ENCODE measurements at regions of chr20 and their contacts with region 1.

Region 1: DNA sequence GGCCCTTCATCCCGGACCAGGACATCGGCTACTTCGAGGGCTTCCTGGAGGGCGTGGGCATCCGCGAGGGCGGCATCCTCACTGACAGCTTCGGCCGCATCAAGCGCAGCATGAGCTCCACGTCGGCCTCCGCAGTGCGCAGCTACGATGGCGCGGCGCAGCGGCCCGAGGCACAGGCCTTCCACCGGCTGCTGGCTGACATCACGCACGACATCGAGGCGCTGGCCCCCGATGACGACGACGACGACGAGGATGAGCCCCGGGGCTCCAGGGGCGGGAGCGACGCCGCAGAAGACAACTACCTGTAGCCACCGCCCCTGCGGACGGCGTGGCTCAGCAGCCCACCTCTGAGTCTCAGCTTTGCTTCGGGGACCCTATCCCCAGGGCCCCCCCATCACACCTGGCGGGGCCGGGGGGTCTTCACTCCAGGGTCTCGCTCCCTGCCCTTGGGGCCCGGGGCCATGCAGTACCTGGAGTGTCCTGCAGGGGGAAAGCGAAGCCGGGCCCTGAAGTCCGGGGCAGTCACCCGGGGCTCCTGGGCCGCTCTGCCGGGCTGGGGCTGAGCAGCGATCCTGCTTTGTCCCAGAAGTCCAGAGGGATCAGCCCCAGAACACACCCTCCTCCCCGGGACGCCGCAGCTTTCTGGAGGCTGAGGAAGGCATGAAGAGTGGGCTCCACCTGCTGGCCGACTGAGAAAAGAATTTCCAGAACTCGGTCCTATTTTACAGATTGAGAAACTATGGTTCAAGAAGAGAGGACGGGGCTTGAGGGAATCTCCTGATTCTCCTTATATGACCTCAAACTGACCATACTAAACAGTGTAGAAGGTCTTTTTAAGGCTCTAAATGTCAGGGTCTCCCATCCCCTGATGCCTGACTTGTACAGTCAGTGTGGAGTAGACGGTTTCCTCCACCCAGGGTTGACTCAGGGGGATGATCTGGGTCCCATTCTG is 20.8 kb upstream of the HCK start:
- DNase-seq: peak; percentile 38
- H3K4me3 ChIP-seq: peak overlapping the region; percentile 19
- H3K27me3 ChIP-seq: peaks cover 37% of the 10 kb centered on the region
- CTCF ChIP-seq: peak; percentile 87

Region 2: GRCh38 chr20:31602779-31603441 is 428.4 kb before region 1 on chr20:
- CTCF ChIA-PET with region 1: no interaction called
- POLR2A ChIA-PET with region 1: no interaction called
- DNase-seq: no peak
- H3K4me3 ChIP-seq: no peak overlapping the region
- H3K27me3 ChIP-seq: no peaks in the 10 kb centered on the region
- CTCF ChIP-seq: 0 out of 2 replicates have a peak, but pooled peaks have one; percentile 15

Region 3: DNA sequence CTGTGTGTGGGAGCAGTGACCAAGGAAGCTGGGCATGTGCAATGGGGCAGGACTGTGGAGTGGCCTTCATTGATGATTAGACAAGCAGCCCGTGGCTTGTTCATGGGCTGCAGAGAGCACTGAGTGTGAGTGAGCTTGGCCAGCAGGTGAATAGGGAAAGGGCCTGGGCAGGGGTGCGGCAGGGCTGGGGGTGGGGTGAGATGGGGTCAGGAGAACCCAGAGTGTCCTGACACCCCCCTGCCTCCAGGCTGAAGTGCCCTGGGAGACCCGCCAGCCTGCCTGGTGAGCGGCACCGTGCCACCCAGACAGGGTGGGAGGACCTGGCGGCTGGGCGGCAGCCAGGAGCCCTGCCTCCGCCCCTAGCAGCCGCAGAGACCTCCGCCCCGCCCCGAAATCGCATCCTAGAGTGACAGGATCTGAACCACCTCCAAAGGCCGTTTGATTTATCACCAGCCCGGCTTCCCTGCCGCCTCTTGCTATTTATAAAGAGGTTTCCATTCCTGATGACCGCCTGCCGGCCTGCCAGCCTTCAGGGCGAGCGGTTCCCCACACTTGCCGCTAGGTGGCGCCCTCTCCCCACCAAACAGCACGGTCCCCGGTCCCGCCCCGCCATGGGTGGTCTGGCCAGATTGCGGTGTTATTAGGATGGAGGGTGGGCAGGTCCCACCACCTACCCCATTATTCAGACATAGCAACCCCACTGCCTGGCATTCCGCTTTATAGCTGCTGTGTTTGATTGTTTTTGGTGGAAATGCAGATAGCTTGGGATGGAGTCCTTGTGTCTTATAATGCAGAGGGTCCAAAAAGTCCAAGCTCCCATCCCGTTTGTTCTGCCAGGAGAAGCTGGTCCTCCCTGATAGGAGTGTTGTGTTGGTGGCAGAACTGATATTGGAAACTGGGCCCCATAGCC is 208.6 kb before region 1 on chr20:
- CTCF ChIA-PET with region 1: interaction called, 83 read pairs
- POLR2A ChIA-PET with region 1: no interaction called
- DNase-seq: no peak
- H3K4me3 ChIP-seq: peak overlapping the region; percentile 7; the same call in 1 of the 2 replicates
- H3K27me3 ChIP-seq: no peaks in the 10 kb centered on the region
- CTCF ChIP-seq: peak; percentile 97

Region 4: GRCh38 chr20:31849455-31849925 is 181.8 kb before region 1 on chr20:
- CTCF ChIA-PET with region 1: interaction called, 121 read pairs
- POLR2A ChIA-PET with region 1: no interaction called
- DNase-seq: no peak
- H3K4me3 ChIP-seq: no peak overlapping the region
- H3K27me3 ChIP-seq: peaks cover 24% of the 10 kb centered on the region
- CTCF ChIP-seq: no peak

Region 5: GRCh38 chr20:31879143-31879987 is 151.9 kb before region 1 on chr20:
- CTCF ChIA-PET with region 1: no interaction called
- POLR2A ChIA-PET with region 1: no interaction called
- DNase-seq: peak; percentile 69
- H3K4me3 ChIP-seq: peak overlapping the region; percentile 62
- H3K27me3 ChIP-seq: peaks cover 3% of the 10 kb centered on the region
- CTCF ChIP-seq: no peak

Region 6: DNA sequence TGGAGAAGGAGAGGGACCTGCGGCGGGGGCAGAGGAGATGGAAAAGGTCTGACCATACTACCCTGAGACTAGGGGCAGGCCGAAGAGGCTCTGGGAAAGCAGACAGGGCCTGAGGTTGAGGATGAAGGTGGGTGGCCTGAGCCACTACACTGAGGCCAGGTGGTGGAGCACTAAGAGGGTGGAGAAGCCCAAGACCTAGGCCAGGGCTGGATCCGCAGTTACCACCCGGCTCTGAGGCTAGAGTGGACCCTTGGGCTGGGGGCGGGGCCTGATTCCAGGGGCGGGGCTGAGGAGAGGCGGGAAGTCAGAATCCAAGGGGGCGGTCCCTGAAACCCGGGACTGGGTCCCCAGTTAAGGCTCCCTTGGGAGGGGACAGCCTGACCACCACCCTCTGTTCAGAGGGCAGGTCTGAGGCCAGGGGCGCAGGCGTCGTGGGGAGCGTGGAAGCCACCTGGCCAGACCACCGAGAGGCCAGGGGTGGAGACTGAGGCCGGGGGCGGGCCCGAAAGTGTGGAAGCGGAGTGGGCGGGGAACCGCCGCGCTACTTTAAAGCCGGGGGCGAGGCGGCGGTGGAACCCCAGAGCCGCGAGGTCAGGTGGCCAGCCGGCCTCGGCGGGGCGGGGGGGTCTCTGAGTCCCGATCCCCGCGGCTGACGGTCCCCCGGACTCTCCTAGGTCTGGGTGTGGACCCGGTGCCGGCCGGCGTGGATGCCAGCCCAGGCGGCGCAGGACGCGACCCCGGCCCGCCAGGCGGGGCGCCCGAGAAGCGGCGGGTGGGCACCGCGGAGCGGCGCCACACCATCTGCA is 12.8 kb before region 1 on chr20:
- CTCF ChIA-PET with region 1: interaction called, 40 read pairs
- POLR2A ChIA-PET with region 1: no interaction called
- DNase-seq: no peak
- H3K4me3 ChIP-seq: peak overlapping the region; percentile 28
- H3K27me3 ChIP-seq: peaks cover 32% of the 10 kb centered on the region
- CTCF ChIP-seq: no peak

Region 7: GRCh38 chr20:32091888-32092346 is 60.6 kb after region 1 on chr20:
- CTCF ChIA-PET with region 1: interaction called, 167 read pairs
- POLR2A ChIA-PET with region 1: no interaction called
- DNase-seq: no peak
- H3K4me3 ChIP-seq: no peak overlapping the region
- H3K27me3 ChIP-seq: peaks cover 12% of the 10 kb centered on the region
- CTCF ChIP-seq: peak; percentile 96

Measured in BJ (cell line).